ENCODE measurements at regions of chr5 and their contacts with region 1.

Region 1: GRCh38 chr5:139633295-139634027 is 14.7 kb upstream of the CXXC5 start:
- DNase-seq: peak; percentile 48
- H3K4me3 Mint-ChIP-seq: no peak overlapping the region
- H3K27ac Mint-ChIP-seq: peak overlapping the region; percentile 11
- H3K4me1 Mint-ChIP-seq: peaks cover 35% of the 10 kb centered on the region
- H3K27me3 Mint-ChIP-seq: no peaks in the 10 kb centered on the region

Region 2: GRCh38 chr5:139422307-139422893 is 211.1 kb before region 1 on chr5:
- intact Hi-C with region 1: loop called (anchors 1 kb)
- DNase-seq: peak; percentile 54
- H3K4me3 Mint-ChIP-seq: no peak overlapping the region
- H3K27ac Mint-ChIP-seq: peak overlapping the region; percentile 26
- H3K4me1 Mint-ChIP-seq: peaks cover 22% of the 10 kb centered on the region
- H3K27me3 Mint-ChIP-seq: no peaks in the 10 kb centered on the region

Region 3: DNA sequence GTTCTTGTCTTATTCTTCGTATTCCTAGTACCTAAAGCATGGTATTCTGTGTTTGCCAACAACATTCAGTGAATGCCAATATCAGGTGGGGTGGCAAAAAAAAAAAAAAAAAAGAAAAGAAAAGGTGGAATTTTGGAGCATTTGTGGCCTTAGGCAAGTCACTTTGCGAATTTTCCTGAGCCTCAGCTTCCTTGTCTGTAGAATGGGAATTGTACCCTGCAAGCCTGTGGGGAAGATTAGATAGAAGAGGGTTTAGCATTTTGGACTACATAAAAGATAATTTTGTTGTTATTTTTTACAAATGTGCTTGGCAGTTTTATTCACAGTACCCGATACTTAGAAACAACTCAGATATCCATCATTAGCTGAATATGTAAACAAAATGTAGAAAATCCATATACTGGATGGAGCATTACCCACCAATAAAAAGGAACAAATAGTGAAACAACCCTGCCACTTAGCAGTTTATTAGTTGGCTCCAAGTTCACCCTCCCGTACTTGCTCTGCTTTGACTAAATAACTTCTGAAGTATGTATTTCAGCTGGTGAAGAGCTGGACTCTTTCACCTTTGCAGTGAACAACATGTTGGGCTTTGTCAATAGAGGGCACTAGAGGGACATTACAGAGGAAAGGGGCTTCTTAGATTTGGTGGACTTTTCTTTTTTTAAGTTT is 58.7 kb before region 1 on chr5:
- intact Hi-C with region 1: loop called (anchors 1 kb)
- DNase-seq: no peak
- H3K4me3 Mint-ChIP-seq: no peak overlapping the region
- H3K27ac Mint-ChIP-seq: no peak overlapping the region
- H3K4me1 Mint-ChIP-seq: peaks cover 64% of the 10 kb centered on the region
- H3K27me3 Mint-ChIP-seq: no peaks in the 10 kb centered on the region

Region 4: GRCh38 chr5:139690064-139690802 is 56.8 kb after region 1 on chr5:
- intact Hi-C with region 1: loop called (anchors 1 kb)
- DNase-seq: no peak
- H3K4me3 Mint-ChIP-seq: no peak overlapping the region
- H3K27ac Mint-ChIP-seq: no peak overlapping the region
- H3K4me1 Mint-ChIP-seq: no peaks in the 10 kb centered on the region
- H3K27me3 Mint-ChIP-seq: peaks cover 2% of the 10 kb centered on the region

Region 5: GRCh38 chr5:139765409-139766217 is 132.2 kb after region 1 on chr5:
- intact Hi-C with region 1: loop called (anchors 1 kb)
- DNase-seq: peak; percentile 68
- H3K4me3 Mint-ChIP-seq: peak overlapping the region; percentile 75
- H3K27ac Mint-ChIP-seq: peak overlapping the region; percentile 47
- H3K4me1 Mint-ChIP-seq: peaks cover 14% of the 10 kb centered on the region
- H3K27me3 Mint-ChIP-seq: peaks cover 46% of the 10 kb centered on the region

Measured in activated T-helper 1 cell treated with anti-CD3 and anti-CD28 coated beads, Interleukin-12 subunit alpha, Interleukin-12 subunit beta, Interleukin-2, Interleukin-4 antibody, amounts not matched to agents 30 ng/mL and 10 ng/mL and 1 ng/mL, durations not matched to agents 14 hours and 24 hours and 36 hours (primary cell).